PC-9 (cell line): ENCODE measurements at regions of chr7 and their contacts with region 1.

Region 1: DNA sequence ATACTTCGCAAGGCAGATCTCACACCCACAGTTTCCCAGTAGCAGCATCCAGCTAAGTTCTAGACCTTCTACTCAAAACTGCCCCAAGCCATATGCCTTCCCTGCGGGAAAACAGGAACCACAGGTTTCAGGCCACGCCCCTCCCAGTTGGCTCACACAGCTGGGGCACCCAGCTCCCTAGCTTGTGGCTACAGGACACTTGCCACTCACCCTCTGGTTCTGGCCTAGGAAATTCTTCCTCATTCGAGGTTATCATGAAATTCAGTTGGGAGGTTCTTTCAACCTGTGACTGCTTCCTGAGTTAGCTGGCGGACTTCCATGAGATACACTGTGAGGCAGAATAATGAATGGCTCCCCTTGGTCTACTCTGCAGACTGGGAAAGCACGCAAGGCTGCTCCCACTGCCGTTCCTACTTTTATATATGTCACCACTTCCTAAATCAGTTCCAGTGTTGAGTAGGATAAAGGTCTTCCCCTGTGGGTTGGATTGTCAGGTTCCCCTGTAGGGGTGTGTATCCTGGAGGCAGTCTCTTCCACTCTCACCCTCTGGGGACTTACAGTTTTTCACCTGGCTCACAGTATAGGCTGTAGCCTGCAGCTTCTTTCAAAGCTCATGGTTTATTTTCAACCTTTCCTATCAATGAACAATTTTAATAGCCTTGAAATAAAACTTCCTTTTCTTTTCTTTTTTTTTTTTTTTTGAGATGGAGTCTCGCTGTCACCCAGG is 36.9 kb downstream of the GPR22 start:
- DNase-seq: peak; percentile 97 to 98
- H3K4me3 ChIP-seq: peak overlapping the region; percentile 43; the same call in 1 of the 2 replicates
- H3K27ac ChIP-seq: peak overlapping the region; percentile 95
- H3K4me1 ChIP-seq: peaks cover 40% of the 10 kb centered on the region
- H3K27me3 ChIP-seq: no peaks in the 10 kb centered on the region
- CTCF ChIP-seq: no peak

Region 2: DNA sequence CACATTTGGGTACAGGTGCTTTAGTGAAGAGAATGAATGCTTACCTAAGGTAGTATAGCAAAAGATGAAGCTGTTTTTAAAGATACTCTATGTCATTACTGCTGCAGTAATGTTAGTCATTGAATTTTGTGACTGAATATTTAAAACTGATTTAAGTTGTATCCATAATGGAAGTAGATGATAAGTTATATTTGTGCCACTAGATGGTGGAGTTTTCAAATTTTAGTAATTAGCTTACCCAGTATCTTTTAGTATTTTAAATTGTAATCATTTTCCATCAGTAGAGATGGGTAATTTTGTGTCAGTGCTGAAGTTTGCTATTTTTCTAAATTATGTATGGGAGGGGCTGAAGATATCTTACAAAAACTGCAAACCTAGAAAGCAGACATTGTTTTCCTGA is 312.7 kb before region 1 on chr7:
- CTCF ChIA-PET with region 1: no interaction called
- POLR2A ChIA-PET with region 1: interaction called, 18 read pairs
- intact Hi-C with region 1: no loop called
- DNase-seq: no peak
- H3K4me3 ChIP-seq: no peak overlapping the region
- H3K27ac ChIP-seq: no peak overlapping the region
- H3K4me1 ChIP-seq: no peaks in the 10 kb centered on the region
- H3K27me3 ChIP-seq: no peaks in the 10 kb centered on the region
- CTCF ChIP-seq: peak; percentile 15; the same call in 1 of the 2 replicates

Region 3: DNA sequence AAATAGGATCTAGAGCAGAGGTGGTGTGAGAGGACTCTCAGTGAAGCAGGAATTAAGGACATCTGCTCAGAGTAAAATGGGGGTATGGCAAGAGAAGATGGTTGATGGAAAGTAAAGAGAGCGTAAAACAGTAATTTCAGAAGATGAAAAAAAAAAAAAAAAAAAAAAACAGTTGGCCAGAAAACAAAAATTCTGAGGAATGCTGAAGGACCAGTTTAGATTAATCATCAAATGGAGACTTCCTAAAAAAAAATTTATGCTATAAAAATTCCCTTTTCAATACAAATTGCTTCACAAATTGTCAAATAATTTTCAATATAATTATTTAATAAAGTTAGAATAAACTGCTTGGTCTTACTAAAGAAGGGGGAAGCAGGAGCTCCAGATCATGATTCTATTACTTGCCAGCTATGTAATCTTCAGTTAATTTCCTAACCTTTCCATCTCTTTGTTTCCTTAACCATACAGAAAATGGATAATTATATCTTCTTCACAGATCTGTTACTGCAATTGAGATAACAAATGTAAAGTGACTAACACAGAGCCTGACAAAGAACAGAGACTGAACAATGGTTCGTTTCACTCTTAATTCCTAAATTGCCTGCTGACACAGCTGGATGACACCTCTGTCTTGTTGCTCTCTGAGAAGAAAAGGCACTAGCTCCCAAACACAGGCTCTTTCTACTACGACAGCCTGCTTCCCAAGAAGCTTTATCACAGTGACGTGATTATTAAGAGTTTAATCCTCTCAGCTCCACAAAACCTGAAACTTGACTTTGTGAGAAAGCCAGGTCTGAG is 101.8 kb before region 1 on chr7:
- CTCF ChIA-PET with region 1: no interaction called
- POLR2A ChIA-PET with region 1: interaction called, 14 read pairs
- intact Hi-C with region 1: no loop called
- DNase-seq: peak; percentile 6 to 69
- H3K4me3 ChIP-seq: peak overlapping the region; percentile 8
- H3K27ac ChIP-seq: peak overlapping the region; percentile 93
- H3K4me1 ChIP-seq: peaks cover 31% of the 10 kb centered on the region
- H3K27me3 ChIP-seq: no peaks in the 10 kb centered on the region
- CTCF ChIP-seq: no peak

Region 4: DNA sequence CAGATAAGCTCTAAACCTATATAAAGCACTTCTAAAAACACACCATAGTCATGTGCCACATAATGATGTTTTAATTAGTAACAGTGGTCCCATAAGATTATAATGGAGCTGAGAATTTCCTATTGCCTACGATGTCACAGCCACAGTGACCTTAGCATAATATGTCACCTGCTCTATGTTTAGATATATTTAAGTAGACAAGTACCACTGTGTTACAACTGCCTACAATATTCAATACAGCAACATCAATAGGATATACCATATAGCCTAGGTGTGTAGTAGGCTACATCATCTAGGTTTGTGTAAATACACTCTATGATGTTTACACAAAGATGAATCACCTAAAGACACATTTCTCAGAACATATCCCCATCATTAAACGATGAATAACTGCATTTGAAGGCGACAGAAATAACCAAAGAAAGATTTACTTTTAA is 12.4 kb before region 1 on chr7:
- CTCF ChIA-PET with region 1: no interaction called
- POLR2A ChIA-PET with region 1: interaction called, 10 read pairs
- intact Hi-C with region 1: no loop called
- DNase-seq: peak in 1 of 2 experiments; percentile 63
- H3K4me3 ChIP-seq: no peak overlapping the region
- H3K27ac ChIP-seq: peak overlapping the region; percentile 26; the same call in 1 of the 2 replicates
- H3K4me1 ChIP-seq: peaks cover 18% of the 10 kb centered on the region
- H3K27me3 ChIP-seq: no peaks in the 10 kb centered on the region
- CTCF ChIP-seq: no peak

Region 5: GRCh38 chr7:107890962-107891635 is 384.3 kb after region 1 on chr7 and contains the start of gene DLD:
- CTCF ChIA-PET with region 1: no interaction called
- POLR2A ChIA-PET with region 1: no interaction called
- intact Hi-C with region 1: loop called (anchors 5 kb)
- DNase-seq: peak; percentile 79 to 92
- H3K4me3 ChIP-seq: peak within 1 kb of the TSS; percentile 61
- H3K27ac ChIP-seq: peak within 1 kb of the TSS; percentile 93
- H3K4me1 ChIP-seq: peaks cover 29% of the 10 kb centered on the region
- H3K27me3 ChIP-seq: no peaks in the 10 kb centered on the region
- CTCF ChIP-seq: no peak
- total RNA-seq, gene DLD: 109 and 157 TPM in 2 replicates